G401 (cell line): ENCODE measurements at regions of chr5 and their contacts with region 1.

Region 1: DNA sequence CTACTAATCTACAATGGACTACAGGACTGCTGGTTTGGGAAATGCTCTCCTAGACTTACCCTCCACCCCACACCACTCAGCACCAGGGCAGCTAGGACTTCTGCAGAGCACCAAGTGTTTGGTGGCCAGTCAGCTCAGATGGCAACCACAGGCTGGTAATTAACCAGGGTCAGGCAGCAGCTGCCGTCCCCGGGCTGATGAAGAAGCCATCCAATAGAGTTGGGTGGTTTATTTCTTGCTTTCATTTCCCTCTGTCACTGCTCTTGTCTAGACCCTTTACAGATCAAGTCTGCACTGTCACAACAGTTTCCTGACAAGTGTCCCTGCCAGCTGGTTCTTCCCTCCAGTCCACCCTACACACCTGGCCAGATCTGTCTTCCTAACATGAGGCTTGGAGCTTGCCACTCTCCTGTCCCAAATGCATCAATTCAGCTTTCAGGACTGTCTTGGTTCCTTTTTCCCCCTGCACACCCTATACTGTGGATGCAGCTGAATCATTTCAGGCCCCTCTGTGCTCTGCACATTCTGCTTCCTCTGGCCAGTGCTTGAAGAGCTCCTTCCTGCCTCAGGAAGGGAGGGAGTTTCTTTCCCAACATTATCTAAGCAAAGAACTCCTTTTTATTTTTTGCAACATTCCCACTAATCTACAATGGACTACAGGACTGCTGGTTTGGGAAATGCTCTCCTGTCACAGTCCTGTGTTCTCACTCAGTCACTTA is 30.2 kb upstream of the HSPA9 start:
- DNase-seq: no peak

Region 2: DNA sequence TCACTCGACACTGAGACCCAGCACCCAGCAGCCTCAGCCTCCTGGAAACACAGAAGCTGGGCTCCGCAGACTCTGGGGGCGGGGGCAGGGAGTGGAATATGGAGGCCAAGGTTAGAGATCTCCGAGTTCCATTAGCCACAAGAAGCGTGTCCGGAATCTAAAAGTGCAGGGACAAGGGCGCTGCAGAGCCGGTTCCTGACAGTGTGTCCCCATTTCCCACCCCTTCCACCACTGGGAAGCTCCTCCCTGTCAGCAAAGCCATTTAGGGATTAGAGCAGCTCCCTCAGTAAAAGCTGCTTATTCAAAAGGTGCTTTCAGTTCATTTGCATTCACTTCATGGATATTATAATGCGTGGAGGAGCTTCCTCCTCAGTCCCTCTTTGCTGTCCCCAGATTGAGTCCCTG is 43.9 kb after region 1 on chr5:
- in situ Hi-C with region 1: loop called (anchors 5 kb)
- DNase-seq: no peak